CD4-positive, alpha-beta T cell (primary cell): ENCODE measurements at regions of chr17 and their contacts with region 1.

Region 1: GRCh38 chr17:29931231-29931932 is 1.4 kb upstream of the SSH2 start:
- DNase-seq: peak; percentile 42 to 90 (median 58)
- ATAC-seq: peak; percentile 68
- H3K4me3 ChIP-seq: peak overlapping the region; percentile 92
- H3K4me3 Mint-ChIP-seq: no peak overlapping the region
- H3K27ac ChIP-seq: no peak overlapping the region
- H3K27ac Mint-ChIP-seq: no peak overlapping the region
- H3K4me1 ChIP-seq: peaks cover 18% of the 10 kb centered on the region
- H3K4me1 Mint-ChIP-seq: peaks cover 30% of the 10 kb centered on the region
- H3K27me3 ChIP-seq: no peaks in the 10 kb centered on the region
- H3K27me3 Mint-ChIP-seq: no peaks in the 10 kb centered on the region
- CTCF ChIP-seq: peak; percentile 87

Region 2: DNA sequence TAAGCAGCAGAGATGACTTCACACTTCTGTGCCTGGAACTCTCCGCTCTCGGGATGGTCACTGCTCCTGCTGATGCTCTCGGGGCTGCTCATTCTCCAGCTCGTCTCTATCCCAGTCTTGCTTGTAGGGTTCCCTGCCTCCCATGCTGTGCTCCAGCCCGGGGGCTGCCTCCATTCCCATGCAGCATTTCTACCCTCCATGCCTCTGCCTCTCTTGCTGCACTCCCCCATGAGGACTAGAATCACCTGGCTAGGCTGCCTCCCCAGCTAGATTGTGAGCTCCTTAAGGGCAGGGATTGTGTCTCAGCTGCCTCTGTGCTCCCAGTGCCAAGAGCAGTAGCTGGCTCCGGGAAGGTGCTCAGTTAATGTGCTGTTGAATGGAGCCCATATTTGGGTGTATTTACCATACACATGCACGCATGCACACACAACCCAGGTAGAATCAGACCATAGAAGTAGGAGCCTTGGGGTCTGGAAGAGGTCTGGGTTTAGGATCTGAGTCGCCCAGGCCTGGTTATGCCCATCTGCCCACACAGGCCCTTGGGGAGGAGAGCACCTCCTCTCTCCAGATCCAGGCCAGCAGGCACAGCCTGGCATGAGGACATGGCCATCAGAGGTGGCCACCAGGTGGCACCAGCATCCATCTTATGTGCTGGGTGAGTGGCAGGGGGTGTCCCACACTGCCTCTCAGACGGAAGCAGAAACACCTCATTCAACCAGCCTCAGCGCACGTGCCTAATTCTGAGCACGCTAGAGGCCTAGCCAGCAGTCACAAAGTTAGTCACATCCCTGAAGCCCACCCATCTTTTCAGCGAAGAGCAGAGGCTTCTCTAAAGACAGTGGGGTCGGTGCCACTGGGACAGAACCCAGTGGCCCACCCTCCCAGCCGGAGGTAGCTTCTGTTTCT is 351.3 kb before region 1 on chr17:
- CTCF ChIA-PET with region 1: no interaction called
- POLR2A ChIA-PET with region 1: interaction called, 3 read pairs
- intact Hi-C with region 1: loop called in 1 of 2 experiments (anchors 5 kb)
- DNase-seq: peak; percentile 84 to 95 (median 88)
- ATAC-seq: peak; percentile 99
- H3K4me3 ChIP-seq: no peak overlapping the region
- H3K4me3 Mint-ChIP-seq: peak overlapping the region; percentile 69
- H3K27ac ChIP-seq: no peak overlapping the region
- H3K27ac Mint-ChIP-seq: peak overlapping the region; percentile 41
- H3K4me1 ChIP-seq: peaks cover 27% of the 10 kb centered on the region
- H3K4me1 Mint-ChIP-seq: peaks cover 27% of the 10 kb centered on the region
- H3K27me3 ChIP-seq: no peaks in the 10 kb centered on the region
- H3K27me3 Mint-ChIP-seq: no peaks in the 10 kb centered on the region
- CTCF ChIP-seq: peak; percentile 88

Region 3: GRCh38 chr17:29640413-29640812 is 291.0 kb before region 1 on chr17:
- CTCF ChIA-PET with region 1: interaction called, 13 read pairs
- POLR2A ChIA-PET with region 1: interaction called, 15 read pairs
- intact Hi-C with region 1: loop called (anchors 2 to 5 kb)
- DNase-seq: no peak
- ATAC-seq: no peak
- H3K4me3 ChIP-seq: no peak overlapping the region
- H3K4me3 Mint-ChIP-seq: no peak overlapping the region
- H3K27ac ChIP-seq: no peak overlapping the region
- H3K27ac Mint-ChIP-seq: peak overlapping the region; percentile 77
- H3K4me1 ChIP-seq: no peaks in the 10 kb centered on the region
- H3K4me1 Mint-ChIP-seq: peaks cover 12% of the 10 kb centered on the region
- H3K27me3 ChIP-seq: no peaks in the 10 kb centered on the region
- H3K27me3 Mint-ChIP-seq: no peaks in the 10 kb centered on the region
- CTCF ChIP-seq: no peak

Region 4: GRCh38 chr17:29802246-29802645 is 129.1 kb before region 1 on chr17:
- CTCF ChIA-PET with region 1: interaction called, 148 read pairs
- POLR2A ChIA-PET with region 1: interaction called, 123 read pairs
- intact Hi-C with region 1: loop called (anchors 1 kb)
- DNase-seq: no peak
- ATAC-seq: no peak
- H3K4me3 ChIP-seq: no peak overlapping the region
- H3K4me3 Mint-ChIP-seq: no peak overlapping the region
- H3K27ac ChIP-seq: no peak overlapping the region
- H3K27ac Mint-ChIP-seq: no peak overlapping the region
- H3K4me1 ChIP-seq: no peaks in the 10 kb centered on the region
- H3K4me1 Mint-ChIP-seq: peaks cover 8% of the 10 kb centered on the region
- H3K27me3 ChIP-seq: no peaks in the 10 kb centered on the region
- H3K27me3 Mint-ChIP-seq: no peaks in the 10 kb centered on the region
- CTCF ChIP-seq: no peak

Region 5: DNA sequence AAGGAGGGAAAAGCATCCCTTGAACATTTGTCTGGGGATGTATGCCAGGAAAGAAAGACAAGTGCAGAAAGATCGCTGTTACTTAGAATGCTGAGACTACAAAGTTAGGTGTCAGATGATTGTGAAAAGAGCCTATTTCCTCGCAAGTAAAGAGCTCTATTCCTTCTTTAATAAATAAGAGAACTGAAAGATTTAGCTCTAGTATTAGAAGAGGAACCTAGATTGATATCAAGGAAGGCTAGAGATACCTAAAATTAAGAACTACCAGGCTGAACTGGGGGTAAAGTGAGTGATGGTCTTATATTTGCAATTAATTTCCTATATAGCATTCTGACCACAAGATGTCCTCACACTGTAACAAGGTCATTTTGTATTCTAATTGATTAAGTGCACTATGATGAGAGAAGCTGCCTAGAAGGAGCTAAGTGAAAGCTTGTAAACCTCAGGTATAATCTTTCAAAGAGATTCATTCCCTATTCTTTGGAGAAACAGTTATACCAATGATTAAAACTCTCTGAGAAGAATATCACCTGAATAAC is 63.7 kb before region 1 on chr17:
- CTCF ChIA-PET with region 1: interaction called, 16 read pairs
- POLR2A ChIA-PET with region 1: interaction called, 9 read pairs
- intact Hi-C with region 1: loop called (anchors 1 to 10 kb)
- DNase-seq: peak in 2 of 14 experiments; percentile 7 to 14
- ATAC-seq: no peak
- H3K4me3 ChIP-seq: no peak overlapping the region
- H3K4me3 Mint-ChIP-seq: no peak overlapping the region
- H3K27ac ChIP-seq: no peak overlapping the region
- H3K27ac Mint-ChIP-seq: no peak overlapping the region
- H3K4me1 ChIP-seq: no peaks in the 10 kb centered on the region
- H3K4me1 Mint-ChIP-seq: peaks cover 54% of the 10 kb centered on the region
- H3K27me3 ChIP-seq: no peaks in the 10 kb centered on the region
- H3K27me3 Mint-ChIP-seq: no peaks in the 10 kb centered on the region
- CTCF ChIP-seq: peak; percentile 13

Region 6: GRCh38 chr17:29968271-29968670 is 36.9 kb after region 1 on chr17:
- CTCF ChIA-PET with region 1: no interaction called
- POLR2A ChIA-PET with region 1: no interaction called
- intact Hi-C with region 1: no loop called
- DNase-seq: no peak
- ATAC-seq: no peak
- H3K4me3 ChIP-seq: no peak overlapping the region
- H3K4me3 Mint-ChIP-seq: no peak overlapping the region
- H3K27ac ChIP-seq: no peak overlapping the region
- H3K27ac Mint-ChIP-seq: no peak overlapping the region
- H3K4me1 ChIP-seq: no peaks in the 10 kb centered on the region
- H3K4me1 Mint-ChIP-seq: no peaks in the 10 kb centered on the region
- H3K27me3 ChIP-seq: no peaks in the 10 kb centered on the region
- H3K27me3 Mint-ChIP-seq: no peaks in the 10 kb centered on the region
- CTCF ChIP-seq: no peak

Region 7: DNA sequence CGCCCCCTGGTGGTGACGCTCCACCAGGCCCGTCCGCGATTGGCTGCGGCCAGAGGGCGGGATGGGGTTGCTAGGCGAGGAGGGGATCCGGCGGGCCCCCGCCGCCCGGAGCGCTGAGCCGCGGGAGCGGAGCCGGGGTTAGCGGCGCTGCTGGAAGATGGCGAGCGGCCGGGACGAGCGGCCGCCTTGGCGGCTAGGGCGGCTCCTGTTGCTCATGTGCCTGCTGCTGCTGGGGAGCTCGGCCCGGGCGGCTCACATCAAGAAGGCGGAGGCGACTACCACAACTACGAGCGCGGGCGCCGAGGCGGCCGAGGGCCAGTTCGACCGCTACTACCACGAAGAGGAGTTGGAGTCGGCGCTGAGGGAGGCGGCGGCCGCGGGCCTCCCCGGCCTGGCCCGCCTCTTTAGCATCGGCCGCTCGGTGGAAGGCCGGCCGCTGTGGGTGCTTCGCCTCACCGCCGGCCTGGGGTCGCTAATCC is 447.5 kb after region 1 on chr17 and contains the start of gene CPD:
- CTCF ChIA-PET with region 1: no interaction called
- POLR2A ChIA-PET with region 1: interaction called, 3 read pairs
- intact Hi-C with region 1: loop called in 1 of 2 experiments (anchors 5 kb)
- DNase-seq: peak; percentile 93 to 99 (median 97)
- ATAC-seq: peak; percentile 94
- H3K4me3 ChIP-seq: peak within 1 kb of the TSS; percentile 78
- H3K4me3 Mint-ChIP-seq: peak within 1 kb of the TSS; percentile 93
- H3K27ac ChIP-seq: peak within 1 kb of the TSS; percentile 82 to 88
- H3K27ac Mint-ChIP-seq: peak within 1 kb of the TSS; percentile 93
- H3K4me1 ChIP-seq: peaks cover 38% of the 10 kb centered on the region
- H3K4me1 Mint-ChIP-seq: peaks cover 65% of the 10 kb centered on the region
- H3K27me3 ChIP-seq: no peaks in the 10 kb centered on the region
- H3K27me3 Mint-ChIP-seq: no peaks in the 10 kb centered on the region
- CTCF ChIP-seq: no peak
- total RNA-seq, gene CPD: 26.2 to 30.7 TPM

Region 8: DNA sequence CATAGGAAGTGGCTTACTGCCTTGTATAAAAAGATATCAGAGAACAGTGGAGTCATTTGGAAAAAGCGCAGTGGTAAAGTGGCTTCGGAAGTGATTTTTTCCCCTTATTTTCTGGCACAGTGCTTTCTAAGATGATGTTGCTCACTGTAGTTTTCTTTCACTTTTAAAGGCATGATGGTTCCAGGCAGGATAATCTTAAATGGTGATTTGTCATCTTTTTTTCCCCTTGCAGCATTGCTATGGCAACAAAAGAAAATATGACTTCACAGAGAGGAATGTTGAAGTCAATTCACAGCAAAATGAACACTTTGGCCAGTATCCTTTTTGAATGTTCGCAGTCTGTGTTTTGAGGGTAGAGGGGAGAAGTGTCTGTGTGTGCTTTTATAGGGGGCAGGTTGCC is 588.3 kb after region 1 on chr17:
- CTCF ChIA-PET with region 1: no interaction called
- POLR2A ChIA-PET with region 1: no interaction called
- intact Hi-C with region 1: no loop called
- DNase-seq: no peak
- ATAC-seq: no peak
- H3K4me3 ChIP-seq: no peak overlapping the region
- H3K4me3 Mint-ChIP-seq: no peak overlapping the region
- H3K27ac ChIP-seq: no peak overlapping the region
- H3K27ac Mint-ChIP-seq: peak overlapping the region; percentile 52
- H3K4me1 ChIP-seq: no peaks in the 10 kb centered on the region
- H3K4me1 Mint-ChIP-seq: peaks cover 6% of the 10 kb centered on the region
- H3K27me3 ChIP-seq: no peaks in the 10 kb centered on the region
- H3K27me3 Mint-ChIP-seq: no peaks in the 10 kb centered on the region
- CTCF ChIP-seq: no peak